ENCODE measurements at regions of chr2 and their contacts with region 1.

Region 1: DNA sequence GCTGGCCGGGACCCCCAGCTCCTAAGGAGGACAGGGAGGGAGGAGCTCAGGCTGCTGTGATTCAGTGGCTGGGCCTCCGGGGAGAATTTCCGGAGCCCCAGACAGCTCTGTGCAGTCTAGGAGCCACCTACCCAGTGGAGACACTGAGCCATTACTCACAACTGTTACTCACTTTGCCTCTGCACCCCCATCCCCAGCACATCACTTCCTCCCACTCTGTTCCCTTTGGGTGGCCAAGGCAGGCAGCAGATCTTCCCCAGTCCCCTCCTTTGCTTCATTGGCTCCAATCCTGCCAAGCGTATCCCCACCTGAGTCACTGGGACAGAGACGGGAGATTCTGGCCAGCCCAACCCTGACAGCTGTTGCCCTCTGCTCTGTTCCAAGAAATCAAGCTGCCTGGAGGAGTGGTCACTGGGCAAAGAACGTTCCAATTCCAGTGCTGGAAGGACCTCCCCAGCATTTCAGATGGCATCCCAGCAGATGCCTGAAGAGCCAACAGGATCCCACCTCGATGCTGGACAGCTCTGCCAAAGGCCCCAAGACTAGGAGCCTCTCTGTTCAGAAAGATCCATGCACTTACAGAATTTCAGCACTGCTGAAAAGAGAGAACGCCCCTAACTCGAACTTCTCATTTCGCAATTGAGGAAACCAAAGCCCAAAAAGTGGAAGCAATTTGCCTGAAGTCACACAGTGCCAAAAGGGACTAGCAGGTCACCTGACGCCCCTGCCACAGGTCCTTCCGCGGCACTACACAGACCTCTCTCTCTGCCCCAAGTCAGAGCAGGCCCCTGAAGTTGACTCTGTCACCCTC is 68.3 kb downstream of the TNS1 start:
- DNase-seq: peak; percentile 78 to 94
- H3K4me3 ChIP-seq: peak overlapping the region; percentile 64 to 81
- H3K27ac ChIP-seq: peak overlapping the region; percentile 98 to 100
- H3K4me1 ChIP-seq: peaks cover 46 to 86% of the 10 kb centered on the region in 2 donors
- H3K27me3 ChIP-seq: no peaks in the 10 kb centered on the region
- CTCF ChIP-seq: no peak

Region 2: DNA sequence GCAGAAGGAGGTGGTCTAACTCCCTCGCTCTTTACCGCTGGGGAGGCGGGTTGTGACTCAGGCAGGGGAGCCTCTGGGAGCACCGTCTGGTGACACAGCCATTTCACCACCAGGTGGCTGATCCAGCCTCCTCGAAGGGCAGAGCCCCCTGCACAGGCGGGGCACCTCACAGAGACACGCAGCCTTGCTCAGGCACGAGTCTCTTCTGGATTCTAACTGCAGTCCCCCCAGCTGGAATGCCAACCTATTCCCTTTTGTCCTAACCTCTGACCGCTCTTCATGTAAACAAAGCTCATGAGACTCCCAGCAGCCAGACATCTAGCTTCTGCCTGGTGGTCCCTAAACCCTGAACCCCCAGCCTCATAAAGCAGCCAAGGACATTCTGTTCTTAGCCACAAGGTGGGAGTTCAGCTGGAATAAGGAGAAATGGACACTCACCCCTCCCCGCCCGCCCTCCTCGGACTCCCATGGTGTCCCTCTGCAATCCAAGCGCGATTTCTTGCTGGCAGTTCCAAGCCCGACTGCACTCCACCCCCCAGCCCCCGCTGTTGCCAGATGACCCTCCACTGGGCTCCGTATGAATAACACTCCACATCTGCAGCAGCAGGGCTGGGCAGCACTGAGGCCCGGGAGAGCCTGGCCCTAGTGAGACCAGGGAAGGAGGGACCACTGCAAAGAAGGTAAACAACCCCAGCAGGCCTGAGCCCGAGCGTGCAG is 16.1 kb before region 1 on chr2:
- intact Hi-C with region 1: loop called (anchors 2 kb)
- DNase-seq: no peak
- H3K4me3 ChIP-seq: peak overlapping the region in 1 of 2 donors; percentile 50
- H3K27ac ChIP-seq: peak overlapping the region; percentile 98 to 100
- H3K4me1 ChIP-seq: peaks cover 52 to 95% of the 10 kb centered on the region in 2 donors
- H3K27me3 ChIP-seq: no peaks in the 10 kb centered on the region
- CTCF ChIP-seq: peak in 2 of 3 experiments; percentile 21 to 34

Measured in ascending aorta (tissue), 2 donors.